ENCODE measurements at regions of chr11 and their contacts with region 1.

Region 1: GRCh38 chr11:125111343-125112207 is at the start of gene TMEM218:
- DNase-seq: peak; percentile 98
- ATAC-seq: peak; percentile 99
- H3K4me3 Mint-ChIP-seq: peak within 1 kb of the TSS; percentile 93
- H3K27ac Mint-ChIP-seq: peak within 1 kb of the TSS; percentile 95
- H3K4me1 Mint-ChIP-seq: peaks cover 18% of the 10 kb centered on the region
- H3K27me3 Mint-ChIP-seq: no peaks in the 10 kb centered on the region
- total RNA-seq, gene TMEM218: 11.3 TPM

Region 2: DNA sequence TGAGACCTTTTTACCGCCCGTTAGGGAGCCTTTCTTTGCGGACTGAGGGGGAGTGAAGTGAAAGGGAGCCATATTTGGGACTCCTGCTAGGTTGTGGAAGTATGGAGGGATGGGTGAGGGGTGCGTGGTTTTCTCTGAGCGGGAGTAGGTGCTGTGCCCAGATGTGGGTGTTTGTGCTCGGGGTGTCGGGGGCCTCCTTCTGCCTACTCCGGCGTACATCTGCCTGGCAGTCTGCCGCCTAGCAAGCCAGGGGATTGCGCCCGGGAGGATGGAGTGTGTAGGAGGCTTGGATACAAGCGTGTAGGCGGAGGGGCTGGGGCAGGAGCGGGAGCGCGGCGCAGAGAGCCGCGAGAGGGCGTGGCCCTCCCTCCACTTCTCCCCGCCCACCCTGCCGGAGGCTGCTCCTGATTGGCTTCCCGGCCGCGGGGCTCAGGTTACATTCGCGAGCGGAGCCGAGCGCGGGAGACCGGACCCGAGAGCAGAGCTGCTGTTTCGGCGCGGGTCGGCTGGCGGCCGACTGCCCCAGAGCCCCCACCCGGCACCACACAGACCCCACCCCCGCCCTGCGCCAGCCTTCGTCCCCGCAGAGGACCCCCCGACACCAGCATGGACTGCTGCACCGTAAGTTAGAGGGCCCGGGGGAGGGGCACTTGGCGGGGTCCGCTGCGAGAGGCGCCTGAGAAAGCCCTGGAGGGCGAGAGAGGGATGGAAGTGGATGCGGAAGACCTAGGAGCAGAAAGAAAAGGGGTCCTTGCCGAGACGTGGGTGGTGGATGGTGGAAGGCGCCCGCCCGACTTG is 371.9 kb before region 1 on chr11 and contains the start of gene NRGN:
- CTCF ChIA-PET with region 1: no interaction called
- POLR2A ChIA-PET with region 1: no interaction called
- intact Hi-C with region 1: loop called in 1 of 2 experiments (anchors 1 kb)
- DNase-seq: peak; percentile 93
- ATAC-seq: peak; percentile 95
- H3K4me3 Mint-ChIP-seq: peak within 1 kb of the TSS; percentile 76
- H3K27ac Mint-ChIP-seq: peak within 1 kb of the TSS; percentile 17
- H3K4me1 Mint-ChIP-seq: peaks cover 9% of the 10 kb centered on the region
- H3K27me3 Mint-ChIP-seq: peaks cover 2% of the 10 kb centered on the region
- total RNA-seq, gene NRGN: 13.5 to 18.1 TPM

Region 3: GRCh38 chr11:124875943-124876817 is 235.4 kb before region 1 on chr11:
- CTCF ChIA-PET with region 1: no interaction called
- POLR2A ChIA-PET with region 1: interaction called, 3 read pairs
- intact Hi-C with region 1: loop called in 1 of 2 experiments (anchors 1 kb)
- DNase-seq: peak; percentile 88
- ATAC-seq: peak; percentile 98
- H3K4me3 Mint-ChIP-seq: peak overlapping the region; percentile 77
- H3K27ac Mint-ChIP-seq: peak overlapping the region; percentile 58
- H3K4me1 Mint-ChIP-seq: peaks cover 16% of the 10 kb centered on the region
- H3K27me3 Mint-ChIP-seq: peaks cover 27% of the 10 kb centered on the region

Region 4: GRCh38 chr11:124961972-124962609 is 149.5 kb before region 1 on chr11:
- CTCF ChIA-PET with region 1: interaction called, 4 read pairs
- POLR2A ChIA-PET with region 1: no interaction called
- intact Hi-C with region 1: loop called in 1 of 2 experiments (anchors 1 kb)
- DNase-seq: no peak
- ATAC-seq: peak; percentile 98
- H3K4me3 Mint-ChIP-seq: no peak overlapping the region
- H3K27ac Mint-ChIP-seq: no peak overlapping the region
- H3K4me1 Mint-ChIP-seq: no peaks in the 10 kb centered on the region
- H3K27me3 Mint-ChIP-seq: no peaks in the 10 kb centered on the region

Region 5: DNA sequence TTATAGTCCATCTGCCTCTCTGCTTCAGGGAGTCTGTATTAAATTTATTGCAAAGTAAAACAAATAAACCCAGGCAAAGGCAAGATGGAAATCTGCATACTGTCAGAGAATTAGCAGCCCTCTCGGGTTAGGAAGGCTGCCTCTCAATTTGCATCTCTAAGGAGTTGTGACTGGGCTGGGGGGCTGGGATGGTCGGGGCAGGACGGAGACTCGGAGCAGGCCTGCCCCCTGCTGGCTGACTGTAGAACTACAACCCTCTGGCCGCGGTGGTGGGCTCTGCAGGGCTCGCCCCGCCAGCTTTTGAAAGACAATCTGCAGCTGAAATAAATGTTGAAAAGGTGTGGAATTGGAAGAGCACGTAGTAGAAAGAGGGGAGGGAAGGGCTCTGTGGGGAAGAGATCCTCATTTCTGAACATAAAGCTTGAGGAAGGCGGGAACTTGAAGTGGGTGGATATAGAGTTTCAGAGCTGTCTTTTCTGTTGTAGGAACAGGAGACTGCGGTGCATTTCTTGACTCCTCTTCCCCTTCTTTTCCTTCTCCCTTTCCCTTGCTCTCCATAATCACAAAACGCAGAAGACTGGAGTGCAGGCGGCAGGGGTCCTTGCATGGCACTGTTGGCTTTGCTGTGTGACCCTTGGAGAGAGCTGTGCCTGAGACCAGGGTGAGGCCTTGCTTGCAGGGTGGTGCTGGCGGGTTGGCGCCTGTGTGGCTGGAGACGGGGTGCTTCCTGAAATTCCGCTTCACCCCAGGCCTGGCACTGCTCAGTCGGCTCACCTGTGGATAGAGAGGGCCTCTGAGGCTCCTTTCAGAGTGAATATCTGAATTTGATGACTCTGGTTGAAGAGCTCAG is 30.3 kb after region 1 on chr11:
- CTCF ChIA-PET with region 1: interaction called, 12 read pairs
- POLR2A ChIA-PET with region 1: no interaction called
- intact Hi-C with region 1: no loop called
- DNase-seq: peak; percentile 74
- ATAC-seq: peak; percentile 80
- H3K4me3 Mint-ChIP-seq: no peak overlapping the region
- H3K27ac Mint-ChIP-seq: no peak overlapping the region
- H3K4me1 Mint-ChIP-seq: peaks cover 2% of the 10 kb centered on the region
- H3K27me3 Mint-ChIP-seq: peaks cover 15% of the 10 kb centered on the region

Region 6: GRCh38 chr11:125568970-125569914 is 457.7 kb after region 1 on chr11 and contains the start of gene EI24:
- CTCF ChIA-PET with region 1: no interaction called
- POLR2A ChIA-PET with region 1: no interaction called
- intact Hi-C with region 1: loop called in 1 of 2 experiments (anchors 5 kb)
- DNase-seq: peak; percentile 95
- ATAC-seq: peak; percentile 95
- H3K4me3 Mint-ChIP-seq: peak within 1 kb of the TSS; percentile 92
- H3K27ac Mint-ChIP-seq: peak within 1 kb of the TSS; percentile 93
- H3K4me1 Mint-ChIP-seq: peaks cover 24% of the 10 kb centered on the region
- H3K27me3 Mint-ChIP-seq: no peaks in the 10 kb centered on the region
- total RNA-seq, gene EI24: 36.3 to 36.6 TPM

Region 7: DNA sequence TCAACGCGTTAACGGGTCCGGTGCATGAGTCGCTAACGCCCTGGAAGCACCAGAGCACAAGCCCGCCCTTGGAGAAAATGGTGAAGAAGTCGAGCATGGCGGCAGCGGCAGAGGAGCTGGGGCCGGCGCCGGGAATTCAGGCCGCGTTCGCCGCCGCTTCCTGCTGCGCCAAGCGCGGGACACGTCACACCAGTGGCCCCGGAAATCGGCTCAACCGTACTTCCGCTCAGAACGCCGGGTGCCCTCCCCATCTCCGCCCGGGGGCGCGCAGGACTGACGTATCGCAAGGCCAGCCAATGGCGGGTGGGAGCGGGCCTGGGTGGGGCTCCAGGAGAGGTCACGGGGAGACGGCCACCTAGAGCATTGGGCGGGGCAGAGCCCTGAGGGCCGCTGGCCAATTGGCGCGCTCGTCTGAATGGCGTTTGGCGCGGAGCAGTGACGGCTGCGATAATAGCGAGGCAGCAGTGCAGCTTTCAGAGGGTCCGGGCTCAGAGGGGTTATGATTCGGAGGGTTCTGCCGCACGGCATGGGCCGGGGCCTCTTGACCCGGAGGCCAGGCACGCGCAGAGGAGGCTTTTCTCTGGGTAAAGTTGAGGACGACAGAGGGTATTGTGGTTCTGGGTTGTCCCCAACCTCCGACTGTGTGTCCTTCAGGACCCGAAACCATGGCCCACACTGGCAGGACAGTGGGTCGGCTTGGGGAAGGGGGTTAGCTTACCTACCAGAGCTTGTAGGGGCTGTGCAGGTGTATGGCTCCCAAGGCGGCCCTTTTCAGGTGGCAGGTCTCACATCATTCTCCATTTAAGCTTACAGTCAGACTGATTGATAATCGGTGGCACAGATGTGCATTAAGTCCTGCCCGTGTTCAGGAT is 1157.4 kb after region 1 on chr11 and contains the starts of genes FOXRED1 and SRPRA:
- CTCF ChIA-PET with region 1: no interaction called
- POLR2A ChIA-PET with region 1: no interaction called
- intact Hi-C with region 1: loop called in 1 of 2 experiments (anchors 5 kb)
- DNase-seq: peak; percentile 100
- ATAC-seq: peak; percentile 100
- H3K4me3 Mint-ChIP-seq: peak within 1 kb of the TSS; percentile 86
- H3K27ac Mint-ChIP-seq: peak within 1 kb of the TSS; percentile 95
- H3K4me1 Mint-ChIP-seq: peaks cover 38% of the 10 kb centered on the region
- H3K27me3 Mint-ChIP-seq: no peaks in the 10 kb centered on the region
- total RNA-seq, gene FOXRED1: 39.0 to 43.7 TPM
- total RNA-seq, gene SRPRA: 131 to 139 TPM